Activated CD4-positive, alpha-beta memory T cell treated with anti-CD3 and anti-CD28 coated beads, Interleukin-2, amount 10 ng/mL, durations not matched to agents 7 days and 5 days (primary cell): ENCODE measurements at regions of chr17 and their contacts with region 1.

Region 1: GRCh38 chr17:40323391-40324381 is 14.7 kb downstream of the RARA start:
- DNase-seq: peak; percentile 52
- H3K4me3 Mint-ChIP-seq: peak overlapping the region; percentile 90
- H3K27ac Mint-ChIP-seq: peak overlapping the region; percentile 93
- H3K4me1 Mint-ChIP-seq: peaks cover 88% of the 10 kb centered on the region
- H3K27me3 Mint-ChIP-seq: no peaks in the 10 kb centered on the region

Region 2: GRCh38 chr17:40247926-40248495 is 75.7 kb before region 1 on chr17:
- CTCF ChIA-PET with region 1: no interaction called
- POLR2A ChIA-PET with region 1: no interaction called
- DNase-seq: no peak
- H3K4me3 Mint-ChIP-seq: no peak overlapping the region
- H3K27ac Mint-ChIP-seq: no peak overlapping the region
- H3K4me1 Mint-ChIP-seq: no peaks in the 10 kb centered on the region
- H3K27me3 Mint-ChIP-seq: no peaks in the 10 kb centered on the region

Region 3: GRCh38 chr17:40340880-40341807 is 17.5 kb after region 1 on chr17:
- CTCF ChIA-PET with region 1: interaction called, 13 read pairs
- POLR2A ChIA-PET with region 1: interaction called, 36 read pairs
- DNase-seq: peak; percentile 91
- H3K4me3 Mint-ChIP-seq: peak overlapping the region; percentile 65
- H3K27ac Mint-ChIP-seq: peak overlapping the region; percentile 84
- H3K4me1 Mint-ChIP-seq: peaks cover 84% of the 10 kb centered on the region
- H3K27me3 Mint-ChIP-seq: no peaks in the 10 kb centered on the region

Region 4: DNA sequence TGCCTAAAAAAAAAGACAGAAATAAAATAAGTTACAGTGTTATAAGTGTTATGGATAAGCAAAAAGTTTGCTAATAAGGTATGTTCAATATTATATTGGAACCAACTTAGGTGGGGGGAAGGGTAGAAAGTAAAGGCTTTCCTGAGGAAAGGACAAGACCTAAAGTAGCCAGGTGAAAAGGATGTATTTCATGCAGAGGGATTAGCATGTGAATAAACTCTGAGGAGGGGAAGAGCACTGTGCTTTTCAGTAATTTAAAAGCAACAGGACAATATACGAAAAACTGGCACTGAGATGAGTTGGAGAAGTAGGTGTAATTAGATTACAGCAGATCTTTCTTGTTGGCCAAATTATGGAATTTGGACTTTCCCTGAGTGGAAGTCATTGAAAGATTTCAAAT is 86.4 kb after region 1 on chr17:
- CTCF ChIA-PET with region 1: no interaction called
- POLR2A ChIA-PET with region 1: no interaction called
- DNase-seq: no peak
- H3K4me3 Mint-ChIP-seq: no peak overlapping the region
- H3K27ac Mint-ChIP-seq: peak overlapping the region; percentile 1
- H3K4me1 Mint-ChIP-seq: peaks cover 38% of the 10 kb centered on the region
- H3K27me3 Mint-ChIP-seq: no peaks in the 10 kb centered on the region

Region 5: DNA sequence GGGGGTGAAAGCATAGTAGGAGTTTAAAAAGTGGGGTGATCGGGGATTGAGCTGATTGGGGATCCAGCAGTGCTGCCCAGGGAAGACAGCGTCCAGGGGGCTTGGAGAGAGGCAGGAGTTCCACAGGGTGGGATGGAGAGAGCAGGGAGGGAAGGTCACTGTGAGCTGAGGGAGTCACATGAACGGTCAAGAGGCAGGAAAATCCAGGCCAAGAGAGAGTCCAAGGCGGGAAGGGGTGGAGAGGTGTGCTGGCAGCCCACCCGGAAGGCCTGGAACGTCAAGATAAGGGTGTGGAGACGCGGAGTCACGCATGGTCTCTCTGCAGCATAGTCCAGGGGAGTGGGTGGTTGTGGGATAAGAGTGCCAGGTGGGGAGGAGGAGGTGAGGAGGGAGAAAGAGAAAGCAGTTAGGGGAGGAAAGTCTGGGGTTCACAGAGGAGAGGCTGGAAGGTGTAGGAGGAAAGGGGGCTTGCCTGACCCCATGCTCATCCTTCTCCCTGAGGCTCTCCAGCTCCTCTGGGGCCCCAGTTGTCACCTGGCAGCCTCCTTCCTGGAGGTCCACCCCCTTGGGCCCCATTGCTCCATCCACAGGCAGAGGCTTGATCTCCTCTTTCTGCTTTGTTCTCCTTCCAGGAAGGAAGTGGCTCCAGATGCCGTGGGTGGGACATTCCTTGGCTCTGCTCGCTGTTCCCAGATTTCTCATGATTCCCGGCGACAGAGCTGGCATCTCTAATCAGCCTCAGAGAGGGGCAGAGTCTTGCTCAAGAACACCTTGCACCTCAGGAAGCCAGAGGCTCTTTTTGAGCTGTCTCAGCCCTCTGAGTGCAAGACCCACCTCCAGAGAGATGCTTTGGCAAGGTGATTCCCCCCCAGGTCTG is 212.8 kb after region 1 on chr17:
- CTCF ChIA-PET with region 1: no interaction called
- POLR2A ChIA-PET with region 1: no interaction called
- DNase-seq: no peak
- H3K4me3 Mint-ChIP-seq: no peak overlapping the region
- H3K27ac Mint-ChIP-seq: no peak overlapping the region
- H3K4me1 Mint-ChIP-seq: peaks cover 73% of the 10 kb centered on the region
- H3K27me3 Mint-ChIP-seq: peaks cover 32% of the 10 kb centered on the region